CD8-positive, alpha-beta T cell (primary cell): ENCODE measurements at regions of chr14 and their contacts with region 1.

Region 1: GRCh38 chr14:66070509-66071319 is 415.5 kb upstream of the CCDC196 start:
- DNase-seq: peak; percentile 47 to 86 (median 73)
- ATAC-seq: peak; percentile 89
- H3K4me3 ChIP-seq: no peak overlapping the region
- H3K4me3 Mint-ChIP-seq: no peak overlapping the region
- H3K27ac ChIP-seq: no peak overlapping the region
- H3K27ac Mint-ChIP-seq: no peak overlapping the region
- H3K4me1 ChIP-seq: no peaks in the 10 kb centered on the region
- H3K4me1 Mint-ChIP-seq: peaks cover 2% of the 10 kb centered on the region
- H3K27me3 ChIP-seq: no peaks in the 10 kb centered on the region
- H3K27me3 Mint-ChIP-seq: no peaks in the 10 kb centered on the region
- CTCF ChIP-seq: peak; percentile 99

Region 2: DNA sequence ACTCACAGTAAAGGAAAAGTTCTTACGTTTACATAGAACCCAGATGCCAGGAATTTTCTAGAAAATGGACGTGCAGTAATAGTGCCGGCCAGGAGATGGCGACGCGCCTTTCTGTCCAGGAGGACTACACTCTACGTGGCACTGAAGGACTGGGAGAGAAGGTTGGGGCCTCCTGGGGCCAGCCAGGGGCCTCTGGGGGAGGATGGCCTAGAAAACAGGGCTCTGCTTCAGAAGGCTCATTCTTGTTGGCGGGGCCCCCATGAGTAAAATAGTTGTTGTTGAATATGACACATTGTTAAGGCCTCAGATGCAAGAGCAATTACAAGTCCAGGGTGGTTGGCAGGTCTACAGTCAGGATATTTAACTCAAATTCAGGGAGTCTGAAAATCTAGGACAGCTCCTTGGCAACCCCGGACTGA is 848.3 kb before region 1 on chr14:
- CTCF ChIA-PET with region 1: interaction called, 12 read pairs
- POLR2A ChIA-PET with region 1: no interaction called
- intact Hi-C with region 1: loop called (anchors 1 kb)
- DNase-seq: peak; percentile 12 to 72 (median 53)
- ATAC-seq: peak; percentile 79
- H3K4me3 ChIP-seq: no peak overlapping the region
- H3K4me3 Mint-ChIP-seq: no peak overlapping the region
- H3K27ac ChIP-seq: no peak overlapping the region
- H3K27ac Mint-ChIP-seq: no peak overlapping the region
- H3K4me1 ChIP-seq: peaks cover 8% of the 10 kb centered on the region
- H3K4me1 Mint-ChIP-seq: peaks cover 18% of the 10 kb centered on the region
- H3K27me3 ChIP-seq: no peaks in the 10 kb centered on the region
- H3K27me3 Mint-ChIP-seq: no peaks in the 10 kb centered on the region
- CTCF ChIP-seq: peak; percentile 88

Region 3: GRCh38 chr14:65810322-65810721 is 260.4 kb before region 1 on chr14:
- CTCF ChIA-PET with region 1: interaction called, 10 read pairs
- POLR2A ChIA-PET with region 1: no interaction called
- intact Hi-C with region 1: loop called (anchors 1 to 5 kb)
- DNase-seq: no peak
- ATAC-seq: no peak
- H3K4me3 ChIP-seq: no peak overlapping the region
- H3K4me3 Mint-ChIP-seq: no peak overlapping the region
- H3K27ac ChIP-seq: no peak overlapping the region
- H3K27ac Mint-ChIP-seq: no peak overlapping the region
- H3K4me1 ChIP-seq: peaks cover 3% of the 10 kb centered on the region
- H3K4me1 Mint-ChIP-seq: peaks cover 3% of the 10 kb centered on the region
- H3K27me3 ChIP-seq: no peaks in the 10 kb centered on the region
- H3K27me3 Mint-ChIP-seq: no peaks in the 10 kb centered on the region
- CTCF ChIP-seq: no peak

Region 4: DNA sequence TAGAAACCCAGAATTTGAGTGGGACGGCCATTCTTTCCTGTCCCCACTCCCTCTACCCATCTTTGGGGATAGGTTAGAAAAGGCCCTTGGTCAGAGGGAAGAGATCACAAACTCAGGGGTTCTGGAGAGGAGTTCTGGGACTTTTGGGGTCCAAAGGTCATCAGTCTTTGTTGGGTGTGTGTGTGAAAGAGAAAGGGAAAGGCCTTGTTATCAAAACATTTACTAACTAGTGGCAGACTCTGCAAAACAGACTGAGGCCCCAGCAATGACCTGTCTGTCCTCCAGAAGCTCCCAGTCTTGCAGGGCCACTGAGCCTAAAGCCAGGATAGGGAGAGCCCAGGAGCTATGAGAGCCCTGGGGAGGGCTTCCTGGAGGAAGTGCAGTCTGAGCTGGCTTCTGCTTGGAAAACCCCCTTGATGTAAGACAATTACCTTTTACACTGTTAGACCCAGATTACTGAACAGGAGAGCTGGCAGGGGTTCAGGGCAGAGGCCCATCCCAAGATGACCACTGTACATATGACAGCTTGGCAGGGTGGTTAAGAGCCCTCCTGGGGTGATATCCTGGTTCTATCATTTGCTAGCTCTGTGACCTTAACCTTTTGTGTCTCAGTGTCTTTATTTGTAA is 13.7 kb before region 1 on chr14:
- CTCF ChIA-PET with region 1: interaction called, 37 read pairs
- POLR2A ChIA-PET with region 1: no interaction called
- intact Hi-C with region 1: no loop called
- DNase-seq: no peak
- ATAC-seq: no peak
- H3K4me3 ChIP-seq: no peak overlapping the region
- H3K4me3 Mint-ChIP-seq: no peak overlapping the region
- H3K27ac ChIP-seq: no peak overlapping the region
- H3K27ac Mint-ChIP-seq: no peak overlapping the region
- H3K4me1 ChIP-seq: peaks cover 9% of the 10 kb centered on the region
- H3K4me1 Mint-ChIP-seq: peaks cover 13% of the 10 kb centered on the region
- H3K27me3 ChIP-seq: no peaks in the 10 kb centered on the region
- H3K27me3 Mint-ChIP-seq: peaks cover 2% of the 10 kb centered on the region
- CTCF ChIP-seq: no peak

Region 5: GRCh38 chr14:66117585-66117984 is 46.9 kb after region 1 on chr14:
- CTCF ChIA-PET with region 1: no interaction called
- POLR2A ChIA-PET with region 1: no interaction called
- intact Hi-C with region 1: no loop called
- DNase-seq: no peak
- ATAC-seq: no peak
- H3K4me3 ChIP-seq: no peak overlapping the region
- H3K4me3 Mint-ChIP-seq: no peak overlapping the region
- H3K27ac ChIP-seq: no peak overlapping the region
- H3K27ac Mint-ChIP-seq: no peak overlapping the region
- H3K4me1 ChIP-seq: no peaks in the 10 kb centered on the region
- H3K4me1 Mint-ChIP-seq: no peaks in the 10 kb centered on the region
- H3K27me3 ChIP-seq: no peaks in the 10 kb centered on the region
- H3K27me3 Mint-ChIP-seq: peaks cover 11% of the 10 kb centered on the region
- CTCF ChIP-seq: no peak